ENCODE measurements at regions of chr7 and their contacts with region 1.

Region 1: GRCh38 chr7:23055582-23056178 is 41.8 kb upstream of the HYCC1 start:
- DNase-seq: peak; percentile 81
- ATAC-seq: peak; percentile 98
- H3K4me3 ChIP-seq: no peak overlapping the region
- H3K4me3 Mint-ChIP-seq: no peak overlapping the region
- H3K27ac ChIP-seq: no peak overlapping the region
- H3K27ac Mint-ChIP-seq: no peak overlapping the region
- H3K4me1 ChIP-seq: no peaks in the 10 kb centered on the region
- H3K4me1 Mint-ChIP-seq: no peaks in the 10 kb centered on the region
- H3K27me3 ChIP-seq: no peaks in the 10 kb centered on the region
- H3K27me3 Mint-ChIP-seq: no peaks in the 10 kb centered on the region
- CTCF ChIP-seq: peak; percentile 94

Region 2: GRCh38 chr7:22499044-22499443 is 556.6 kb before region 1 on chr7:
- CTCF ChIA-PET with region 1: no interaction called
- POLR2A ChIA-PET with region 1: no interaction called
- intact Hi-C with region 1: no loop called
- DNase-seq: no peak
- ATAC-seq: no peak
- H3K4me3 ChIP-seq: no peak overlapping the region
- H3K4me3 Mint-ChIP-seq: no peak overlapping the region
- H3K27ac ChIP-seq: no peak overlapping the region
- H3K27ac Mint-ChIP-seq: no peak overlapping the region
- H3K4me1 ChIP-seq: peaks cover 0 to 6% of the 10 kb centered on the region in 2 donors
- H3K4me1 Mint-ChIP-seq: peaks cover 6% of the 10 kb centered on the region
- H3K27me3 ChIP-seq: peaks cover 0 to 4% (median 2%) of the 10 kb centered on the region in 4 experiments
- H3K27me3 Mint-ChIP-seq: peaks cover 8% of the 10 kb centered on the region
- CTCF ChIP-seq: no peak

Region 3: GRCh38 chr7:22726345-22727185 is 329.1 kb before region 1 on chr7:
- CTCF ChIA-PET with region 1: interaction called, 86 read pairs
- POLR2A ChIA-PET with region 1: no interaction called
- intact Hi-C with region 1: loop called (anchors 1 kb)
- DNase-seq: peak; percentile 84
- ATAC-seq: peak; percentile 73
- H3K4me3 ChIP-seq: peak overlapping the region in 4 of 5 experiments; percentile 58 to 70 (median 66)
- H3K4me3 Mint-ChIP-seq: peak overlapping the region; percentile 80
- H3K27ac ChIP-seq: peak overlapping the region; percentile 90 to 94
- H3K27ac Mint-ChIP-seq: peak overlapping the region; percentile 90
- H3K4me1 ChIP-seq: peaks cover 77 to 79% of the 10 kb centered on the region in 2 donors
- H3K4me1 Mint-ChIP-seq: peaks cover 80% of the 10 kb centered on the region
- H3K27me3 ChIP-seq: no peaks in the 10 kb centered on the region
- H3K27me3 Mint-ChIP-seq: no peaks in the 10 kb centered on the region
- CTCF ChIP-seq: peak; percentile 78

Region 4: DNA sequence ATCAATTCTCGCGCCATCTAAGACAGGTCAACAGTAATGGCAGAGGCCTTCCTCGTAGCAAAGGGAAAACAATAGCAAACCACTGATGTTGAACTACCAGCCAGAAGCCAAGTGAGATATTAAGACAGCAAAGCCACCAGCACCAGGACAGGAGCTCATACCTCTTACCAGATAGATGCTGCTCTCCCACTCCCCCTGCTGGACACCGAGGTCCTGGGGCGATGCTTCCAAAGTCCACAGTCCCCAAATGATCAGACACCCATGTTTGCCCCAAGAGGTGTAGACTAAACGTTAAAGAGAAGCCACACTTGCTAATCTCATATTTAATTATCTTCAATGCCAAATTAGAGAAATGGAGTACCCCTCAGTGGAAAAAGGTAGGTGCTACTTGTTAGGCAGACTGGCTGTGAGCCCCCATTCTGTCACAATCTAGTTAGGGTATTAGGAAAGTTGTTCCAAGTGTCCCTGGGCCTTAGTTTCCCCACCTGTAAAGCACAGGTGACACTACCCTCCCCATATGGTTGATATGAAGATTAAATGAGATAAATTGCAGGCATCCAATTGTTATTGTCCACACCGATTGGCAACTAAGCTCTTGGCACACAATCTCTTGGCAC is 273.0 kb before region 1 on chr7:
- CTCF ChIA-PET with region 1: interaction called, 78 read pairs
- POLR2A ChIA-PET with region 1: no interaction called
- intact Hi-C with region 1: loop called (anchors 1 kb)
- DNase-seq: peak; percentile 84
- ATAC-seq: peak; percentile 96
- H3K4me3 ChIP-seq: no peak overlapping the region
- H3K4me3 Mint-ChIP-seq: no peak overlapping the region
- H3K27ac ChIP-seq: no peak overlapping the region
- H3K27ac Mint-ChIP-seq: no peak overlapping the region
- H3K4me1 ChIP-seq: no peaks in the 10 kb centered on the region
- H3K4me1 Mint-ChIP-seq: peaks cover 3% of the 10 kb centered on the region
- H3K27me3 ChIP-seq: no peaks in the 10 kb centered on the region
- H3K27me3 Mint-ChIP-seq: no peaks in the 10 kb centered on the region
- CTCF ChIP-seq: peak; percentile 87

Region 5: DNA sequence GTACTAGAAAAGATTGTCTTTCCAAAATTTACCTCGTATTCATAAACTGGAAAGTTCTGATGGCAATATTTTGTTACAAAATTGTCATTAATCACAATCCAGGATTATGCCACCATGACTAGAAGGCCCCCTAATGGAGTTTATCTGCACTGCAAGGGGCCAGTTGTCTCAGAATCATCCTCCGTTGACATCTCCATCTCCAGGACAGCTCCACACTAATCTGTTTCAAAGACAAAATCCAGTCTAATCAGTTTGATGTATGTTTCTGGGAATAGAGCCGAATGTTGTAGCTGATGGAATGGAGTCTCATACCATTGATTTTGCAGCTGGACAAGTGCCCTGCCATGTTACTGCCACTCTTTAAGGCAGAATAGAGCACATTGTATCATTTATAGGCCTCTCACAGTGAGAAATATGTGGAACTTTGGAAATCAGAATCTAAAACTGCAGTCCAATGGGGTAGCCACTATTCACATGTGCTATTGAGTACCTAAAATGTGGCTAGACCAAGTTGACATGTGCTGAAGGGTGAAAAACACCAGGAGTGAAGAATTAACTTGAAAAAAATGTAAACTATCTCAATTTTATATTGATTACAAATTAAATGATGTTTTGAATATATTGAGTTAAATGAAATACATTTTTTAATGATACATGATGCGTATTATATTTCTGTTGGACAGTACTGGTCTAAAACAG is 194.7 kb before region 1 on chr7:
- CTCF ChIA-PET with region 1: interaction called, 17 read pairs
- POLR2A ChIA-PET with region 1: no interaction called
- intact Hi-C with region 1: no loop called
- DNase-seq: peak; percentile 39
- ATAC-seq: peak; percentile 66
- H3K4me3 ChIP-seq: no peak overlapping the region
- H3K4me3 Mint-ChIP-seq: no peak overlapping the region
- H3K27ac ChIP-seq: no peak overlapping the region
- H3K27ac Mint-ChIP-seq: peak overlapping the region; percentile 11
- H3K4me1 ChIP-seq: peaks cover 0 to 3% of the 10 kb centered on the region in 2 donors
- H3K4me1 Mint-ChIP-seq: peaks cover 39% of the 10 kb centered on the region
- H3K27me3 ChIP-seq: no peaks in the 10 kb centered on the region
- H3K27me3 Mint-ChIP-seq: no peaks in the 10 kb centered on the region
- CTCF ChIP-seq: peak; percentile 82

Region 6: DNA sequence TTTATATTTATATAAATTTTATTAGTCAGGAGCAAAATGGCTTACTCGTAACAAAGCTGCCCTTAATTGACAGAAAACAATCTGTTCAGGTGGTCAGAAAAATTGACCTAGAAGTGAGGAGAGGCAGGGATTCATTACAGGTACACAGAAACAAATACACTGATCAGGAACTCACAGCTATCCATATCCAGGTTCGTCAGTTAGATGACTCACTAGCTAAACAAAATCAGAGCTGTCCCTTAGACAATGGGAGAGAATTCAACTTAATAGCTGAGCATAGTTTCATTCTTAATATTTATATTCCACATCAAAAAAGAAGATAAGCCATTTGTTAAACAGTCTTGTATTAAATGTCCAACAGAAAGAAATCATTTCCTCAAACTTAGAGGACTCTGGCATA is 83.5 kb before region 1 on chr7:
- CTCF ChIA-PET with region 1: interaction called, 21 read pairs
- POLR2A ChIA-PET with region 1: no interaction called
- intact Hi-C with region 1: no loop called
- DNase-seq: no peak
- ATAC-seq: no peak
- H3K4me3 ChIP-seq: no peak overlapping the region
- H3K4me3 Mint-ChIP-seq: no peak overlapping the region
- H3K27ac ChIP-seq: peak overlapping the region in 1 of 2 donors; percentile 1
- H3K27ac Mint-ChIP-seq: no peak overlapping the region
- H3K4me1 ChIP-seq: no peaks in the 10 kb centered on the region
- H3K4me1 Mint-ChIP-seq: no peaks in the 10 kb centered on the region
- H3K27me3 ChIP-seq: no peaks in the 10 kb centered on the region
- H3K27me3 Mint-ChIP-seq: no peaks in the 10 kb centered on the region
- CTCF ChIP-seq: no peak

Region 7: DNA sequence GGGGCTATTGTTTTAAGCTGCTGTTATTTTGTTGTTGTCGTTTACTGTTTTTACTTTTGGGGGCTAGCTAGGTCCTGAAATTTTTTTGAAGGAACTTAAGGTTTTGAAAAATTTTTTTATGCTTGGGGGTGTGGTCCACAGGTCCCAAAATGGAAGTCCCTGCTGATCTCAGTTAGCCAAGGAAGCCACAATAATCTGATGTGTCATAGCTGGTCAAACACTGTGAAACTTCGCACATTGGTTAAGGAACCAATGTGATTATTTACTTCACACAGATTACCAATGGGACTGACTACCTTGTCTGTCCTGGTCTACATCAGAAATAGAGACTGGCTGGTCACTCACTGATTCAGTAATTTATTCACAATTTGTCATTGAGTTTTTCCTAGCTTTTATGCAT is 12.2 kb before region 1 on chr7:
- CTCF ChIA-PET with region 1: interaction called, 22 read pairs
- POLR2A ChIA-PET with region 1: no interaction called
- intact Hi-C with region 1: no loop called
- DNase-seq: no peak
- ATAC-seq: no peak
- H3K4me3 ChIP-seq: no peak overlapping the region
- H3K4me3 Mint-ChIP-seq: no peak overlapping the region
- H3K27ac ChIP-seq: no peak overlapping the region
- H3K27ac Mint-ChIP-seq: no peak overlapping the region
- H3K4me1 ChIP-seq: no peaks in the 10 kb centered on the region
- H3K4me1 Mint-ChIP-seq: no peaks in the 10 kb centered on the region
- H3K27me3 ChIP-seq: no peaks in the 10 kb centered on the region
- H3K27me3 Mint-ChIP-seq: no peaks in the 10 kb centered on the region
- CTCF ChIP-seq: no peak

Region 8: DNA sequence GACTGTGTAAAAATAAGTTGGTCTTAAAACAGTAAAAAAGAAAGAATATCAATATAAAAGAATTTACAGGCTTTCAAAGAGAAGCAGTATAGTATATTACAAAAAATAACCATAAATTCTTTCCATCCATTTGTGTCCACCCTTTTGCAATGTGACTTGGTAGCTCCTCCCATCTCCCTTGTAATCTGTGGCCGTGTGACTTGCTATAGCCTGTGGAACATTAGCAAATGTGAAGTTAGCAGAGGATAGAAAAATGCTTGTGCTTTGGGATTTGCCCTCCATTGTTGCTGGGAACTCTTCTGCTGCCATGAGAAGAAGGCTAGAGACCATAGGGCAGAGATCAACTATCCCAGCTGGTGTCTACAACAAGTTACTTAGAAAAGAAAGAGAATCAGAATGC is 80.1 kb after region 1 on chr7:
- CTCF ChIA-PET with region 1: no interaction called
- POLR2A ChIA-PET with region 1: no interaction called
- intact Hi-C with region 1: no loop called
- DNase-seq: no peak
- ATAC-seq: no peak
- H3K4me3 ChIP-seq: no peak overlapping the region
- H3K4me3 Mint-ChIP-seq: no peak overlapping the region
- H3K27ac ChIP-seq: no peak overlapping the region
- H3K27ac Mint-ChIP-seq: no peak overlapping the region
- H3K4me1 ChIP-seq: no peaks in the 10 kb centered on the region
- H3K4me1 Mint-ChIP-seq: no peaks in the 10 kb centered on the region
- H3K27me3 ChIP-seq: no peaks in the 10 kb centered on the region
- H3K27me3 Mint-ChIP-seq: no peaks in the 10 kb centered on the region
- CTCF ChIP-seq: no peak

Measured in B cell (primary cell).